HEK293 (cell line): ENCODE measurements at regions of chr12 and their contacts with region 1.

Region 1: GRCh38 chr12:116609319-116610114 is 50.3 kb downstream of the MAP1LC3B2 start:
- H3K4me3 ChIP-seq: no peak overlapping the region
- H3K27ac ChIP-seq: no peak overlapping the region
- H3K4me1 ChIP-seq: no peaks in the 10 kb centered on the region
- CTCF ChIP-seq: peak; percentile 20; the same call in 1 of the 2 replicates

Region 2: DNA sequence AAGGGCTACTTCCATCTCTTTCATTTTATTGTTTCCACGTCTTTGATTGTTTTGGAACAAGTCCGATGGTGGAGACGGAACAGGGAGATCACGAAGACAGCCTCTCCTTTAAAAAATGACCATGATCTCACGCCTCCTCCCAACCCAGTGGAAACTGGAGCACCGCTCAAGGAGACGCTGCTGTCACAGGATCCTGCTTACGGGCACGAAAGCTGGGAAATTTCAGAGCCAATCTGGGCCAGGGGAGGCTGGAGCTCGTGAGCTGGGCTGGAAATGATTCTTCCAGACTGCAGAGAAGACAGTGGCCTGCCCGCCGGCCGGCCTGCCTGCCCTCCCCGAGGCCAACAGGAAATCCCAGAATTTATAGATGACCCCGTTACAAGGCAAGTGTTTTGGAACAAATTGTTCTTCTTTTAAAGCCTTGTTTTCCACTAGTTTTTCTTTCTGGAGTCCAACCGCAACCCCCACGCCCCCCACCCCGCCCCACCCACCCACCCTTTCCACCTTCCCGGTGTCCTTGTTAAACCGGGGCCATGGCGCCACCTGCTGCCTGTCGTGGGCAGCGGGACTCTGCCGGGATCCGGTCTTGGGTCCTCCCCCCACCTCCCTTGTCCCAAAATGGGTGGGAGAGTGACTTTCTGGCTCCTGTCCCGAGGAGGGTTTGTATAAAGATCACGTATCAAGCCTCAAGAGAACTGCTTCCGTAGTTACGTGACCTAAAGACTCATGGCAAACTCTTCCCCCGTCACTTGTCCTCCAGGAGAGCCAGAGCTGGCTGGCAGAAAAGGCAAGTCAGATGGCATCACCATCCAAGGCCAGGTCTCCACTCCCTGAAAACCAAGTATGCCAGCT is 10.0 kb before region 1 on chr12:
- CTCF ChIA-PET with region 1: interaction called, 10 read pairs
- POLR2A ChIA-PET with region 1: no interaction called
- H3K4me3 ChIP-seq: no peak overlapping the region
- H3K27ac ChIP-seq: no peak overlapping the region
- H3K4me1 ChIP-seq: no peaks in the 10 kb centered on the region
- CTCF ChIP-seq: no peak

Region 3: DNA sequence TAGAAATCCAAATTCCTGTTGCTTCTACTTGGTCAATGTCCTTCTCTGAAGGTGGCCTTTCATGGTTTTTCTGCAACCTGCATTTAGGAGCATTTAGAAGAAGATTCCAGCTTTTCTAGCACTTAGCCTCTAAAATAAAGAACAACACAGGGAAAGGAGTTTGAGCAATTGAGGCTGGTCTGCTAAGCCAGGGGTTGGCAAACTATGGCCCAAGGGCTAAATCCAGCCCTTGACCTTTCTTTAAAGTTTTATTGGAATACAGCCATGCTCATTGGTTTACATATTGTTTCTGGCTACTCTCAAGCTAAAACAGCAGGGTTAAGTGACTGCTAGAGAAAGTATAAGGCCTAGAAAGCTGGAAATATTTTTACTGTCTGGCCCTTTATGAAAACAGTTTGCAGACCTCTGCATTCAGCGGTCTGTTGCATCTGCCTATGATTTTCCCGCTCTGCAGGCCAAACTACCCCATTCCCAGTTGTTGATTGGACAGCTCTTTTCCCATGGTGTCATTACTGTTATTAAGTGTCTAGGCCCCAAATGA is 89.1 kb after region 1 on chr12:
- CTCF ChIA-PET with region 1: no interaction called
- POLR2A ChIA-PET with region 1: no interaction called
- H3K4me3 ChIP-seq: no peak overlapping the region
- H3K27ac ChIP-seq: no peak overlapping the region
- H3K4me1 ChIP-seq: no peaks in the 10 kb centered on the region
- CTCF ChIP-seq: no peak

Region 4: DNA sequence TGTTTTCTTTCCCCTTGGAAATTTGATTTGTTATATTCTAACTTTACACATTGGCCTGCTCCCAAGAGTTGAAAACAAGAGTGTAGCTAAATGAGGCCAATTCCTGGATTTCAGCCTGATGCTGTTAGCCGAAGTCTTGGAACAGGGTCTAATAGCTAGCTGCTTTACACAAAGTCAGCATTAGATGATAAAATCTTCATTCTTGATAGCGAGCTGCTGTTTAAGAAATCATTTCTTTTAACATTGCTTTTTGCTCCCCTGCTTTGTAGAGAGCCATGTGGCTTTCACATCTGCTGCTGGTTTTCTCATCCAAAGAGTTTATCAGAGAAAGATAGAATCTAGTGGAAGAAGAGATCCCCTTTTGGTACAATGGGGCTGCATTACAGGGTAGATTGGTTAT is 323.6 kb after region 1 on chr12:
- CTCF ChIA-PET with region 1: no interaction called
- POLR2A ChIA-PET with region 1: no interaction called
- H3K4me3 ChIP-seq: no peak overlapping the region
- H3K27ac ChIP-seq: no peak overlapping the region
- H3K4me1 ChIP-seq: peaks cover 8% of the 10 kb centered on the region
- CTCF ChIP-seq: no peak